Testis (tissue), 5 donors: ENCODE measurements at regions of chr1 and their contacts with region 1.

Region 1: DNA sequence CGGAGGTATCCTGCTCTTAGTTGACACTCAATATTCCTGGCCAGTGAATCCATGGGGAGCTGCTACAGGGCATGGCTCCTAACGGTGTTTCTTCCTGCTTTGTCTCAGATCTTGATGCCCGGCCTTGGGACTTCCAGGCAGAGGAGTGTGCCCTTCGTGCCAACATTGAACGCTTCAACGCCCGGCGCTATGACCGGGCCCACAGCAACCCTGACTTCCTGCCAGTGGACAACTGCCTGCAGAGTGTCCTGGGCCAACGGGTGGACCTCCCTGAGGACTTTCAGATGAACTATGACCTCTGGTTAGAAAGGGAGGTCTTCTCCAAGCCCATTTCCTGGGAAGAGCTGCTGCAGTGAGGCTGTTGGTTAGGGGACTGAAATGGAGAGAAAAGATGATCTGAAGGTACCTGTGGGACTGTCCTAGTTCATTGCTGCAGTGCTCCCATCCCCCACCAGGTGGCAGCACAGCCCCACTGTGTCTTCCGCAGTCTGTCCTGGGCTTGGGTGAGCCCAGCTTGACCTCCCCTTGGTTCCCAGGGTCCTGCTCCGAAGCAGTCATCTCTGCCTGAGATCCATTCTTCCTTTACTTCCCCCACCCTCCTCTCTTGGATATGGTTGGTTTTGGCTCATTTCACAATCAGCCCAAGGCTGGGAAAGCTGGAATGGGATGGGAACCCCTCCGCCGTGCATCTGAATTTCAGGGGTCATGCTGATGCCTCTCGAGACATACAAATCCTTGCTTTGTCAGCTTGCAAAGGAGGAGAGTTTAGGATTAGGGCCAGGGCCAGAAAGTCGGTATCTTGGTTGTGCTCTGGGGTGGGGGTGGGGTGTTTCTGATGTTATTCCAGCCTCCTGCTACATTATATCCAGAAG is 16.7 kb downstream of the ALX3 start:
- DNase-seq: peak; percentile 85
- H3K4me3 ChIP-seq: no peak overlapping the region
- H3K27ac ChIP-seq: no peak overlapping the region
- H3K4me1 ChIP-seq: peaks cover 36% of the 10 kb centered on the region
- H3K27me3 ChIP-seq: no peaks in the 10 kb centered on the region
- CTCF ChIP-seq: peak; percentile 82 to 98 (median 88)
- POLR2A ChIP-seq: no peak

Region 2: DNA sequence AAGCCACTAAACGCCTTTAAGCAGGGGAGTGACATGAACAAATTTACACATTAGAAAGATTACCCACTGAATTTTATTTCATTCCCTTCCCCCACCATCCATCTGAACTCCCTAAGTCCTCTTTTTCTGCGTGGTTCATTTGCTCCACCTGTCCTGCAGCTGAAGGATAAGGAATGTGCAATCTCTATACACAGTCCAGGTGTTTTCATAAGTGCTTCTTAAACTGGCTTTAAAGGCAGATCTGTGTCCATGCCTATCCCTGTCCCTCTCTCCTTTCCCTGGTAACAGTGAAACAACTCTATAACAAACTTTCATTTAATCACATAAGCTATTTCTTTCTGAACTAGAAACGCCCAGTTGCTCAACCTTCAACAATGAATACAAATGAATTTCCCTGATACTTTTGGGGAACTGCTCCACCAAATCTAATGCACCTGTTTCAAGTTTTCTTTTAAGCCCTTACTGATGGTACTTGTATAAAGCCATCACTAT is 321.4 kb before region 1 on chr1:
- intact Hi-C with region 1: no loop called
- DNase-seq: no peak
- H3K4me3 ChIP-seq: no peak overlapping the region
- H3K27ac ChIP-seq: peak overlapping the region in 1 of 2 donors; percentile 19
- H3K4me1 ChIP-seq: no peaks in the 10 kb centered on the region
- H3K27me3 ChIP-seq: no peaks in the 10 kb centered on the region
- CTCF ChIP-seq: no peak
- POLR2A ChIP-seq: no peak

Region 3: GRCh38 chr1:109933856-109934711 is 119.7 kb before region 1 on chr1:
- intact Hi-C with region 1: no loop called
- DNase-seq: no peak
- H3K4me3 ChIP-seq: no peak overlapping the region
- H3K27ac ChIP-seq: no peak overlapping the region
- H3K4me1 ChIP-seq: peaks cover 25% of the 10 kb centered on the region
- H3K27me3 ChIP-seq: no peaks in the 10 kb centered on the region
- CTCF ChIP-seq: no peak
- POLR2A ChIP-seq: no peak

Region 4: DNA sequence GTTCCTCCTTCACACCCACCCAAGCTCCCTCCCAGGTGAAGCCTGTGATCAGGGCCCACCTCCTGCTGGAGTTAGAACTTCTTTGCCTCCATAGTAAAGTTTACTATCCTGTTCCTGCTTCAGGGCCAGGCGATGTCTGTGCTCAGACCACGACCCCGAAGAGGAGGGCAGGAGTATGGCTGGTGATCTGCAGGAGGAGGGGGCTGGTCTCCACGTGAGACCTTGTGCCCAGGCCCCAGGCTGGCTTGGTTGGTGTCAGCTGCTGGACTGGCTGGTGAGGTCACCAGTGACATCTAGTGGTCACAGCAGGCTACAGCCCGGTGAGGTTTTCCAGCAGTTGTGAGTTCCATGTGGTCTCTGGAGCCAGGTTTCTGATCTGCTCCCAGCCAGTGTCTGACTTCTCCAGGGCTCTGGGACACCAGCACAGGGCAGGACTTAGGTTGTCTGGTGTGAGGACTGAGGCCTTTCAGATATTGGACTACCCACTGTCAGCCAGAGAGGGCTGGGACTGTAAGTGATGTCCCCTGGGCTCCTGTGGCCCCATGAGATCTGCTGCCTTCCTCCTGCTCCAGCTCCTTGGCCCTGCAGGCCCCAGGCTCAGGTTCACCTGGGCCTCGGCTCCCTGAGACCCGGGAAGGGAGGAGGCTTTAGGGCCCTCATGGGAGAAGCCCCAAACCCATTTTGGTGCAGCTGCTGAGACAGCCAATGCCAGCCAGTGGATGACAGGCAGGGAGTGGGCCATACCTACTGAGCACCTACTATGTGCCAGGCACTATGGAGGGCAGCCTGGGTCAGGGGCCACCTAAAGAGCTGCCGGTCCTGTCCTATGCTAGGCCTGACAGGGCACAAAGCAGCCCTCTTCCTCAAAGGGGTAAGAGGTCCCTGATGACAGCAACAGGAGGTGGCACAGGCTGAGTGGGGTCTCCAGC is 52.5 kb after region 1 on chr1:
- intact Hi-C with region 1: loop called (anchors 5 kb)
- DNase-seq: peak; percentile 85
- H3K4me3 ChIP-seq: no peak overlapping the region
- H3K27ac ChIP-seq: no peak overlapping the region
- H3K4me1 ChIP-seq: no peaks in the 10 kb centered on the region
- H3K27me3 ChIP-seq: no peaks in the 10 kb centered on the region
- CTCF ChIP-seq: peak; percentile 68 to 88 (median 82)
- POLR2A ChIP-seq: no peak